Posterior cingulate gyrus (tissue), 11 donors: ENCODE measurements at regions of chr16 and their contacts with region 1.

Region 1: GRCh38 chr16:56317998-56318826 is 107.1 kb downstream of the AMFR start:
- DNase-seq: peak; percentile 83 to 99 (median 90)

Region 2: DNA sequence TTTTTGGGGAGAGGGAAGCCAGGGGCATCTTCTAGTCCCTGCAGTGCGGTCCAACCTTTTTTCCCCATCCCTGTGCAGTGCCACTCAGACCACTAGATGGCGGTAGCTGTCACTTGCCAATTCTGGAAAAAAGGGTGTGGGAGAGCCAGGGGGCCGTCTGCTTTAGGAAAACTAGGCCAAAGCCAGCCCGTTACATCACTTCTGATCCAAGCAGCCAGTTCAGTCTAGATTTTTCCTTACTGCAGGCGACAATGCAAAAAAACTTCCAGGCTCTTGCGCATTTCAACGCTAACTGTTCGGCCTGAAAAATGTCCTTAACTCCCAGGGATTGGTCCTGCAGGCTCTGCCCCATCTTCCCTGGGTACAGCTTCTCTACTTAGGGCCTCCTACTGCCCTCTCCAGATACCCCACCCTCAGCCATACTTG is 373.8 kb before region 1 on chr16:
- intact Hi-C with region 1: loop called (anchors 1 kb)
- DNase-seq: peak; percentile 65 to 96 (median 82)

Region 3: GRCh38 chr16:56102183-56102686 is 216.0 kb before region 1 on chr16:
- intact Hi-C with region 1: loop called (anchors 10 kb)
- DNase-seq: peak in 9 of 10 donors; percentile 16 to 90 (median 39)

Region 4: GRCh38 chr16:56246051-56246817 is 72.0 kb before region 1 on chr16:
- intact Hi-C with region 1: loop called (anchors 5 kb)
- DNase-seq: peak in 9 of 10 donors; percentile 59 to 97 (median 79)

Region 5: DNA sequence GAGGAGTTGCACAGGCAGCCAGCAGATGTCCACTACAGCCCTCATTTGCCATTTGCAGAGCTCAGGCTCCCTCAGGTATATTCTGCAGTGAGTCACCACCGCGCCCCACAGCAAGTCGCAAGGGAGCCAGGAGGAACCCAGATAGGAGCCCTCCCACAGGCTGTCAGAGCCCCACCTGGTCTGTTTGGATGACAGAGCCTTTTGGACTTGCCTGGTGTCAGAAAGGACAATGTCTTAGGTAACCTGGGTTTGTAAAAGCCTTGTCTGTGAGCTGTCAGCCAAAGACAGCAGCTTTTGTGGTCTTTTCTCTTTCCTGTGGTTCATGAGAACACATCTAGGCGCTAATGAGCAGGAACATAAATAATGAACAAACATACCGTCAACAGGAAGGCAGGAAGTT is 56.1 kb before region 1 on chr16:
- intact Hi-C with region 1: loop called (anchors 5 kb)
- DNase-seq: no peak